ENCODE measurements at regions of chr10 and their contacts with region 1.

Region 1: GRCh38 chr10:22693371-22693784 is 21.0 kb downstream of the PIP4K2A start:
- DNase-seq: peak in 2 of 9 experiments; percentile 47 to 59
- ATAC-seq: peak; percentile 56
- H3K4me3 ChIP-seq: no peak overlapping the region
- H3K4me3 Mint-ChIP-seq: peak overlapping the region; percentile 53
- H3K27ac ChIP-seq: peak overlapping the region in 1 of 2 experiments; percentile 52
- H3K27ac Mint-ChIP-seq: peak overlapping the region; percentile 89
- H3K4me1 ChIP-seq: peaks cover 93% of the 10 kb centered on the region
- H3K4me1 Mint-ChIP-seq: peaks cover 95% of the 10 kb centered on the region
- H3K27me3 ChIP-seq: no peaks in the 10 kb centered on the region
- H3K27me3 Mint-ChIP-seq: no peaks in the 10 kb centered on the region
- CTCF ChIP-seq: no peak

Region 2: DNA sequence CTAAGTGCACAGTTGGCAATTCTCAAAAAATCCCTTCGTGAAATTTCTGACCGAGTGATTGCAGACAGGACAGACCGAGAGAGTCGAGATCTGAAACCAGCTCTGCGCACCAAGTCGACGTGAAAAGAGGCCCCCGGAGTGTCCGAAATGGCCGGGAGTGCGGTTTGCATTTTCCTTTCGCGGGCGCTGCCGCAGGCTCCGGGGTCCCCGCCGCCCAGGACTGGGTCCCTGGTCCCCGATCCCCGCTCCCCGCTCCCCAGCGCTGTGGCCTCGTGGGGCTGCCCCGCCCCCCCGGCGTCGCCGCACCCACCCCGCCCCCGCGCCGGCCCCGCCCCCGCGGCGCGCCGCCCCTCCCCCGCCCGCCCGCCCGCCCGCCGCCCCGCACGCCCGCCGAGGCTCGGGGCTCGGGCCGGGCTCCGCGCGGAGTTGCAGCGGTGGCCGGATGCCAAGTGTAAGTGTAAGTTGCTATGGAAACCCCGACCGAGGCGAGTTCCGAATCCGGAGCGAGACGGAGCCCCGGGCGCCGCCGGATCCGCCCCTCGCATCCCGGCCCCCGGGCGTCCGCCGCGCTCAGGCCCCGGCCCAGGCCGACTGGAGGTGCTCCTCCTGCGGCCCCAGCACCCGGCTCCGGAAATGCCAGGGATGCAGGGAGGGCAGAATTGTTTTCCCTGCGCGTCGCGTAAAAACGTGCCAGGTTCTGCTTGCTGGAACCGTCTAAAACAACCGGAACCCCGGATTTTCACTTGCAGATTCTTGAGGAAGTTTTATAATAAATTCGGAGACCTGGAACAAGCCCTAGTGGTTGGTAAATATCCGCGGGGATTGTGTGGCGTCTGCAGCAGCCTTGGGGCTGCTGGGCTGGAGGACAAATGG is 367.9 kb before region 1 on chr10:
- CTCF ChIA-PET with region 1: no interaction called
- POLR2A ChIA-PET with region 1: no interaction called
- intact Hi-C with region 1: no loop called
- DNase-seq: peak in 8 of 9 experiments; percentile 62 to 92 (median 78)
- ATAC-seq: peak; percentile 26
- H3K4me3 ChIP-seq: peak overlapping the region; percentile 43 to 57
- H3K4me3 Mint-ChIP-seq: peak overlapping the region; percentile 80
- H3K27ac ChIP-seq: peak overlapping the region; percentile 46 to 51
- H3K27ac Mint-ChIP-seq: peak overlapping the region; percentile 88
- H3K4me1 ChIP-seq: peaks cover 33% of the 10 kb centered on the region
- H3K4me1 Mint-ChIP-seq: peaks cover 40% of the 10 kb centered on the region
- H3K27me3 ChIP-seq: peaks cover 20 to 21% of the 10 kb centered on the region in 2 experiments
- H3K27me3 Mint-ChIP-seq: peaks cover 38% of the 10 kb centered on the region
- CTCF ChIP-seq: no peak

Region 3: GRCh38 chr10:22704471-22704911 is 11.1 kb after region 1 on chr10:
- CTCF ChIA-PET with region 1: interaction called, 3 read pairs
- POLR2A ChIA-PET with region 1: interaction called, 4 read pairs
- intact Hi-C with region 1: loop called in 1 of 2 experiments (anchors 2 kb)
- DNase-seq: no peak
- ATAC-seq: no peak
- H3K4me3 ChIP-seq: no peak overlapping the region
- H3K4me3 Mint-ChIP-seq: peak overlapping the region; percentile 52
- H3K27ac ChIP-seq: peak overlapping the region in 1 of 2 experiments; percentile 37
- H3K27ac Mint-ChIP-seq: peak overlapping the region; percentile 91
- H3K4me1 ChIP-seq: peaks cover 94% of the 10 kb centered on the region
- H3K4me1 Mint-ChIP-seq: peaks cover 96% of the 10 kb centered on the region
- H3K27me3 ChIP-seq: no peaks in the 10 kb centered on the region
- H3K27me3 Mint-ChIP-seq: no peaks in the 10 kb centered on the region
- CTCF ChIP-seq: no peak

Measured in CD8-positive, alpha-beta T cell (primary cell).